Calu3 (cell line): ENCODE measurements at regions of chr7 and their contacts with region 1.

Region 1: GRCh38 chr7:17234398-17235031 is 63.9 kb upstream of the AHR start:
- DNase-seq: peak; percentile 76
- H3K4me3 Mint-ChIP-seq: peak overlapping the region; percentile 50
- H3K27ac Mint-ChIP-seq: peak overlapping the region; percentile 96
- H3K4me1 Mint-ChIP-seq: peaks cover 94% of the 10 kb centered on the region
- H3K27me3 Mint-ChIP-seq: peaks cover 12% of the 10 kb centered on the region
- CTCF ChIP-seq: no peak

Region 2: DNA sequence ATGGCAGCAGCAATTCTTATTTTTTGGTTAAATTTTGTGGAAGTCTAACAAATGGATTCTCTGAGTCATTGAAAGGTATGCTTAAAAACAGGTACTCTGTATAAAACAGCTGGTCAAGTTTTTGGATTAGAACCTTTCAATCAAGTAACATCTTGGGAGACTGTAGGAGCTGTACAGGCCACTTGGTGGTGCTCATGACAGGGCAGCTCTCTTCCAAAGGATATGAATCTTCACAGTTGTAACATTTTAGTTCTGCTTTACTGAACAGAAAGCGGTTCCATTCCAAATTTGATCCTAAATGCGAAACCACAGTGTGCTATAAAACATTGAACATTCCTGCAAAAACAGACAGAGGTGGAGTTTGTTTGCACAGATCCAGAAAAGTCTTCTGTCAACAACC is 308.2 kb before region 1 on chr7:
- CTCF ChIA-PET with region 1: no interaction called
- intact Hi-C with region 1: loop called (anchors 5 kb)
- DNase-seq: peak; percentile 57
- H3K4me3 Mint-ChIP-seq: no peak overlapping the region
- H3K27ac Mint-ChIP-seq: peak overlapping the region; percentile 48
- H3K4me1 Mint-ChIP-seq: peaks cover 78% of the 10 kb centered on the region
- H3K27me3 Mint-ChIP-seq: no peaks in the 10 kb centered on the region
- CTCF ChIP-seq: peak; percentile 72

Region 3: GRCh38 chr7:17139081-17139480 is 95.4 kb before region 1 on chr7:
- CTCF ChIA-PET with region 1: no interaction called
- intact Hi-C with region 1: loop called (anchors 1 kb)
- DNase-seq: peak; percentile 43
- H3K4me3 Mint-ChIP-seq: peak overlapping the region; percentile 25
- H3K27ac Mint-ChIP-seq: peak overlapping the region; percentile 100
- H3K4me1 Mint-ChIP-seq: peaks cover 64% of the 10 kb centered on the region
- H3K27me3 Mint-ChIP-seq: no peaks in the 10 kb centered on the region
- CTCF ChIP-seq: no peak

Region 4: DNA sequence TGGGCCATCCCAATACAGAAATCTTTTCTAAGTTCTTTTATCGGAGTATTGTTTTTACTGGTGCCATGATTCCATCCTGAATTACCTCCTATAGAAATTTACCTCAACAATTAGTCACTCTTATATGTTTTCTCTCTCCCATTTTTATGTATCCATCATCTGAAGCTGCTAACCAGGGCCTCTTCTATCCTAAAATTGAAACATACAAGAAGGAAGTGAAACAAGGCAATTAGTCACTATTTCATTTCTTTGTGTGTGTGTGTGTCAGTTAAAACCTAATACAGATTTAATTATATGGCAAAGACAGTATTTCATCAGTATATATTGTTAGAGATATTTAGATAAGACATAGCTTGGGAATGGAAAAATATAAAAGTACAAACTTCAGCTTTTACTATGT is 84.5 kb before region 1 on chr7:
- CTCF ChIA-PET with region 1: no interaction called
- intact Hi-C with region 1: no loop called
- DNase-seq: no peak
- H3K4me3 Mint-ChIP-seq: no peak overlapping the region
- H3K27ac Mint-ChIP-seq: peak overlapping the region; percentile 51
- H3K4me1 Mint-ChIP-seq: peaks cover 72% of the 10 kb centered on the region
- H3K27me3 Mint-ChIP-seq: no peaks in the 10 kb centered on the region
- CTCF ChIP-seq: no peak

Region 5: GRCh38 chr7:17304926-17305325 is 70.4 kb after region 1 on chr7:
- CTCF ChIA-PET with region 1: no interaction called
- intact Hi-C with region 1: no loop called
- DNase-seq: peak; percentile 71
- H3K4me3 Mint-ChIP-seq: no peak overlapping the region
- H3K27ac Mint-ChIP-seq: no peak overlapping the region
- H3K4me1 Mint-ChIP-seq: no peaks in the 10 kb centered on the region
- H3K27me3 Mint-ChIP-seq: no peaks in the 10 kb centered on the region
- CTCF ChIP-seq: no peak

Region 6: GRCh38 chr7:17347401-17347800 is 112.9 kb after region 1 on chr7:
- CTCF ChIA-PET with region 1: no interaction called
- intact Hi-C with region 1: no loop called
- DNase-seq: no peak
- H3K4me3 Mint-ChIP-seq: no peak overlapping the region
- H3K27ac Mint-ChIP-seq: peak overlapping the region; percentile 23
- H3K4me1 Mint-ChIP-seq: peaks cover 25% of the 10 kb centered on the region
- H3K27me3 Mint-ChIP-seq: no peaks in the 10 kb centered on the region
- CTCF ChIP-seq: no peak